SK-MEL-5 (cell line): ENCODE measurements at regions of chr4 and their contacts with region 1.

Region 1: GRCh38 chr4:25439918-25440477 is 62.9 kb downstream of the ANAPC4 start:
- DNase-seq: peak; percentile 84

Region 2: DNA sequence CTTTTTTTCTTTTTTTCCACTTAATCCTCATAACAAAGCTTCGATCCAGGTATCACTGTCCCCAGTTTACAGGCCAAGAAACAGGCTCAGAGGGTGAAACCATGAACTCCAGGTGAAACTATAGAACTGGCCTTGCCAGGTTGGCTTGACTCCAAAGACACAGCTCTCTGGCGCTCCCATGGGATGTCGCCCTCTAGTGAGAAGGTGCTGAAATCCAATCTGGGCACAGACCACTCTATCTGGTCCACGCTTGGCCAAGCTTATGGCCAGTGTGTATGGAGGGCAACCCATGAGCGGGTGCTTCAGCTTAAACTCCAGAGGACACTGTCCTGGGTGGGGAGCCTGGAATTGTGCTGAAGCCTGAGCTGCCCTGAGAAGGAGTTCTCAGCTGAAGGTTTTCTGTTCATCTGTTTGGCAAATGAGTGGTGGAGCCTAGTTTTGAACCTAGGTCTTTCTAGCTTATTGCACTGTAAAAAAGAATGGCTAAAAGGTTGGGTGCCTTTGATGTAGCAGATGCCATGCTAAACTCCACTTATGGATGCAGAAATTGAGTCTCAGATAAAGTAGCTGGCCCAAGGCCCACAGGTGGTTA is 352.3 kb after region 1 on chr4:
- in situ Hi-C with region 1: loop called (anchors 25 kb)
- DNase-seq: peak; percentile 62